WTC11 (cell line): ENCODE measurements at regions of chr5 and their contacts with region 1.

Region 1: DNA sequence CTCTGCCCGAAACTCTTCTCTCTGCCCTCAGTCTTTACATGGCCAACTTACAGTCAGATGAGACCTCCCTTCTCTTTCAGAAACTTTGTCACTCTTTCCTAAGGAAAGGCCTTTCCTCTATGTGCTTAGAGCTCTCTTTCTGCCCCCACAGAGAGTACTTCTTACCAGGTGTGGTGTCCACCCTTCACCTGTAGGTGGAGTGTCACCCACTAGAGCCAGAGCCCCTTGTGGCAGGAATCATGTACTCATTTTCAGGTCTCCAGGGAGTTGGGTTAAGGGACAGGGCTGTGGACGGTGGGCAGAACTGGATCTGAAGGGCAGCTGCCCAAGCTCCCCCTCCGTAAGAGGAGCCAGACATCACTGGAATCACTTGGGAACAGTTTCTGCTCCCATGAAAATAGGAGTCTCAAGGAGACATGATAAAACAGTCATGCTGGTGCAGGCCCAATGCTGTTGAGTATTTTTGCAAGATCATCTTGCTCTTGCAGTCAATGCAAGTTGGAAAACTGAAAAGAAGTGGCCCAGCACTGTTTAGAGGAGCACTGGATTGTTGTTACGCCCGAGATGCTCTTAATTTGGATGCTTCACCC is 436.7 kb downstream of the ZSWIM6 start:
- DNase-seq: peak; percentile 79
- ATAC-seq: peak; percentile 100
- H3K4me3 Mint-ChIP-seq: no peak overlapping the region
- H3K27ac Mint-ChIP-seq: 0 out of 2 replicates have a peak overlapping the region, but pooled peaks have one; percentile 33
- H3K4me1 Mint-ChIP-seq: peaks cover 6% of the 10 kb centered on the region
- H3K27me3 Mint-ChIP-seq: no peaks in the 10 kb centered on the region; the same call in 1 of the 2 replicates
- CTCF ChIP-seq: peak; percentile 79

Region 2: GRCh38 chr5:61678966-61679365 is 89.8 kb before region 1 on chr5:
- CTCF ChIA-PET with region 1: interaction called, 17 read pairs
- POLR2A ChIA-PET with region 1: no interaction called
- DNase-seq: peak; percentile 49
- ATAC-seq: peak; percentile 98
- H3K4me3 Mint-ChIP-seq: no peak overlapping the region
- H3K27ac Mint-ChIP-seq: no peak overlapping the region
- H3K4me1 Mint-ChIP-seq: peaks cover 17% of the 10 kb centered on the region
- H3K27me3 Mint-ChIP-seq: no peaks in the 10 kb centered on the region
- CTCF ChIP-seq: no peak

Region 3: DNA sequence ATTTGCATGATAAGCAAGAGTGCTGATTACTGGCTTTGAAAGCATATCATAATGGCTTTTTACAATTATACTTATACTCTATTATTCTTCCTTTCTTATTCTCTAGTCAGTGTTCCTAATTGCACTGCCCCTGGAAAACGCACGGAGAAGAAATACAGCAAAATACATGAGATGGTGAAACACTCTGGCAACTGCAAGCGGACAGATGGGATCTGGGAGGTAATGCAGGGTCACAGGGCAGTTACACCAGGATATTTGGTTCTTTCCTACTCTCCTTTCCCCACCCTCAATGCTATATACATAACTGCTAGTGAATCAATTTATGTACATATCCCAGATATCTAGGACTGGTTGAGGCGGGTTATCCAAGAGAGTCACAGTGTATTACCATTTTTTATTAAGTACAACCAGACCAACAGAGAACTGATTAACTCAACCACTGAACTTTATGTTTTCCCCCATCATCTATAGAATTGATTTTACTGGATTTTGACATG is 13.0 kb before region 1 on chr5:
- CTCF ChIA-PET with region 1: interaction called, 26 read pairs
- POLR2A ChIA-PET with region 1: no interaction called
- DNase-seq: no peak
- ATAC-seq: no peak
- H3K4me3 Mint-ChIP-seq: no peak overlapping the region
- H3K27ac Mint-ChIP-seq: no peak overlapping the region
- H3K4me1 Mint-ChIP-seq: peaks cover 18% of the 10 kb centered on the region
- H3K27me3 Mint-ChIP-seq: no peaks in the 10 kb centered on the region; the same call in 1 of the 2 replicates
- CTCF ChIP-seq: no peak

Region 4: GRCh38 chr5:61790678-61791077 is 21.9 kb after region 1 on chr5:
- CTCF ChIA-PET with region 1: interaction called, 16 read pairs
- POLR2A ChIA-PET with region 1: no interaction called
- DNase-seq: no peak
- ATAC-seq: no peak
- H3K4me3 Mint-ChIP-seq: no peak overlapping the region
- H3K27ac Mint-ChIP-seq: no peak overlapping the region
- H3K4me1 Mint-ChIP-seq: no peaks in the 10 kb centered on the region
- H3K27me3 Mint-ChIP-seq: no peaks in the 10 kb centered on the region
- CTCF ChIP-seq: no peak

Region 5: GRCh38 chr5:61817472-61818326 is 48.9 kb after region 1 on chr5:
- CTCF ChIA-PET with region 1: interaction called, 28 read pairs
- POLR2A ChIA-PET with region 1: no interaction called
- DNase-seq: peak; percentile 32
- ATAC-seq: peak; percentile 91
- H3K4me3 Mint-ChIP-seq: no peak overlapping the region
- H3K27ac Mint-ChIP-seq: no peak overlapping the region
- H3K4me1 Mint-ChIP-seq: peaks cover 21% of the 10 kb centered on the region
- H3K27me3 Mint-ChIP-seq: no peaks in the 10 kb centered on the region
- CTCF ChIP-seq: no peak

Region 6: GRCh38 chr5:62143268-62144229 is 374.8 kb after region 1 on chr5:
- CTCF ChIA-PET with region 1: interaction called, 13 read pairs
- POLR2A ChIA-PET with region 1: no interaction called
- DNase-seq: no peak
- ATAC-seq: peak; percentile 47
- H3K4me3 Mint-ChIP-seq: peak overlapping the region; percentile 19
- H3K27ac Mint-ChIP-seq: no peak overlapping the region
- H3K4me1 Mint-ChIP-seq: peaks cover 38% of the 10 kb centered on the region
- H3K27me3 Mint-ChIP-seq: peaks cover 3% of the 10 kb centered on the region; the same call in 1 of the 2 replicates
- CTCF ChIP-seq: no peak